Endothelial cell of umbilical vein (primary cell): ENCODE measurements at regions of chr4 and their contacts with region 1.

Region 1: DNA sequence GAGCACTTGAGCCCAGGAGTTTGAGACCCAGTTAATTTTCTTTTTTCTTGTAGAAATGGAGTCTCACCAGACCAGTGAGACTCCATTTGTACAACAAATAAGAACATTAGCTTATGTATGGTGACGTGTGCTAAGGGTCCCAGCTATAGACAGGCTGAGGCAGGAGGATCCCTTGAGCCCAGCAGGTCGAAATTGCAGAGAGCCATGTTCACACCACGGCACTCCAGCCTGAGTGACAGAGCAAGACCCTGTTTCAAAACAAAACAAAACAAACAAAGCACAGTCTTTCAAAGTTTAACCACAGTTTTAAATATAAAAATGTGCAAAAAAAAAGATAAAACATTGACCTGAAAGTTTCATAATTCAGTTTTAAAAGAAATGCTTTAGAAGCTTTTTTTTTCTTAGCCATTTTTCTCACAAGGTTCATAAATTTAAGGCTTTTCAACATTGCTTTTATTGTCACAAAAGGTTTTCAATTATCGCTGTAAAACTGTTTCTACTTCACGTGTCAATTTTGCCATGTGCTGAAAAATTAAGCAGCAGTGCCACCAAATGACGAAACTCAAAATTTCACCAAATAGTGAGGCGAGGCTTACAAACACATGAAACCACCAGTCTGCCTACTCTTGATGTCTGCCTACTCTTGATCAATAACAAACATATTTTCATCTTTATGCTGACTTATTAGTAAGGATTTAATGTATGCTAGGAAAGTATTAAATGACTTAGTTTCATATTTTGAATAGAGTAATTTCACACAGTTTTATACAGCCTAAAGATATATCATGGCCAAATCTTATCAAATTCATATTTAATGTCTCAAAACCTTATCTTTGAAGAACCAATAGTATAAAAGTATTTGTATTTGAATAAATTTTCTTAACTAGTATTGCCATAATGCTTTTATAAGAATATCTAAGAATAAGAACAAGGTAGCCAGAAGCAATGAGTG is 126.3 kb downstream of the NEK1 start:
- DNase-seq: peak; percentile 78
- H3K4me3 ChIP-seq: no peak overlapping the region
- H3K27ac ChIP-seq: no peak overlapping the region
- H3K4me1 ChIP-seq: peaks cover 3% of the 10 kb centered on the region
- H3K27me3 ChIP-seq: no peaks in the 10 kb centered on the region
- CTCF ChIP-seq: peak; percentile 39 to 52
- POLR2A ChIP-seq: no peak

Region 2: GRCh38 chr4:168923526-168924194 is 562.4 kb before region 1 on chr4:
- CTCF ChIA-PET with region 1: interaction called, 96 read pairs
- POLR2A ChIA-PET with region 1: no interaction called
- dilution Hi-C with region 1: loop called (anchors 10 kb)
- intact Hi-C with region 1: loop called (anchors 1 kb)
- DNase-seq: peak; percentile 67
- H3K4me3 ChIP-seq: no peak overlapping the region
- H3K27ac ChIP-seq: no peak overlapping the region
- H3K4me1 ChIP-seq: no peaks in the 10 kb centered on the region
- H3K27me3 ChIP-seq: no peaks in the 10 kb centered on the region
- CTCF ChIP-seq: peak; percentile 57 to 66
- POLR2A ChIP-seq: no peak

Region 3: GRCh38 chr4:168995537-168996295 is 490.4 kb before region 1 on chr4:
- CTCF ChIA-PET with region 1: interaction called, 7 read pairs
- POLR2A ChIA-PET with region 1: no interaction called
- dilution Hi-C with region 1: no loop called
- intact Hi-C with region 1: loop called (anchors 1 kb)
- DNase-seq: peak; percentile 24
- H3K4me3 ChIP-seq: no peak overlapping the region
- H3K27ac ChIP-seq: no peak overlapping the region
- H3K4me1 ChIP-seq: no peaks in the 10 kb centered on the region
- H3K27me3 ChIP-seq: no peaks in the 10 kb centered on the region
- CTCF ChIP-seq: peak in 1 of 2 donors; percentile 3
- POLR2A ChIP-seq: no peak

Region 4: DNA sequence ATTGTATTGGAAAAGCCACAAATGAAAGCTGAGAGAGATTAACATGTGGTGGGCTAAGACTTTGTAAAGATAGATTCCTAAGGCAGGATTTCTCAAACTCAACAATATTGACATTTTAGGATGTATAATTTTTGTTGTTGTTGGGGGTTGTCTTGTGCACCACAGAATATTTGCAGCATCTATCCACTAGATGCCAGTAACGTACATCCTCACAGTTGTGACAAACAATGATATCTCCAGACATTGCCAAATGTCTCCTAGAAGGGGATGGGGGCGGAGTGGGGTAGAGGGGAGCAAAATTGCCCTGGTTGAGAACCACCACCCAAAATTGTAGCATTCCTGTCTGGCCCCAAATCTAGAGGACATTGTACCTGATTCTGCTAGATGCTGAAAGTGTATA is 461.3 kb before region 1 on chr4:
- CTCF ChIA-PET with region 1: interaction called, 25 read pairs
- POLR2A ChIA-PET with region 1: no interaction called
- dilution Hi-C with region 1: loop called (anchors 10 kb)
- intact Hi-C with region 1: loop called (anchors 1 kb)
- DNase-seq: peak; percentile 68
- H3K4me3 ChIP-seq: no peak overlapping the region
- H3K27ac ChIP-seq: no peak overlapping the region
- H3K4me1 ChIP-seq: no peaks in the 10 kb centered on the region
- H3K27me3 ChIP-seq: no peaks in the 10 kb centered on the region
- CTCF ChIP-seq: peak; percentile 51 to 57
- POLR2A ChIP-seq: no peak

Region 5: DNA sequence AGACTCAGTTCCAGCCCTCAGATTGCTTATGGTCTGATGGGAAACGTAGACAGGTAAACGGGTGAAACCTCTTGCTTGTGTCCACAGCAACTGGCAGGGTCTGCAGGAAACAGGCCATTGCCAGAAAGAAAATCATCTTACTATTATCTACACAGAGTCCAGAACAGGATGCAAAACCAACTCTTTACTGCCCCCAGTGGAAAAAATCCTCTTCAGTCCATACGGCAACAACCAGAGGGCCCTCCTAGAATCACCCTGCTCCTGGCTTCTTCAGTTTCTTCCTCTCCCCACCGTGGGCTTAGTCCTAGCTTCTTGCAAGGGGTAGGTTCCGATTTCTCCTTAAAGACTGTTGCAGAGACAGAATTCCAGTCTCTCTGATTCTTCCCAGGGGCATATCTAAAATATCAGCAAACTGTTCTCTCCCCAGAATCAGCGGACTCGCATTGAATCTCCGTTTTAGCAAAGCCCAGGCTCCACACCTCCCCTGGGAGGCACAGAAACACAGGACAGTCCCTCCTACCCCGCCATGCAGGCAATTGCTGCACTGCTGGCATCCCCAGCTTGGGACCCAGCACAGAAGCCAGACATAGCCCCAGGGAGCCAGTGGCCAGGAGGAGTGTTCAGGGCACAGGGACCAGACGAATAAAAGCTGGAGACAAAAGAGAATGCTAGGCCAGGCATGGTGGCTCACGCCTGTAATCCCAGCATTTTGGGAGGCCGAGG is 174.3 kb before region 1 on chr4:
- CTCF ChIA-PET with region 1: interaction called, 4 read pairs
- POLR2A ChIA-PET with region 1: no interaction called
- dilution Hi-C with region 1: no loop called
- intact Hi-C with region 1: loop called (anchors 10 kb)
- DNase-seq: peak; percentile 57
- H3K4me3 ChIP-seq: no peak overlapping the region
- H3K27ac ChIP-seq: no peak overlapping the region
- H3K4me1 ChIP-seq: peaks cover 13% of the 10 kb centered on the region
- H3K27me3 ChIP-seq: no peaks in the 10 kb centered on the region
- CTCF ChIP-seq: peak; percentile 60 to 66
- POLR2A ChIP-seq: no peak

Region 6: GRCh38 chr4:169377367-169377766 is 108.7 kb before region 1 on chr4:
- CTCF ChIA-PET with region 1: no interaction called
- POLR2A ChIA-PET with region 1: no interaction called
- dilution Hi-C with region 1: no loop called
- intact Hi-C with region 1: no loop called
- DNase-seq: no peak
- H3K4me3 ChIP-seq: no peak overlapping the region
- H3K27ac ChIP-seq: no peak overlapping the region
- H3K4me1 ChIP-seq: no peaks in the 10 kb centered on the region
- H3K27me3 ChIP-seq: no peaks in the 10 kb centered on the region
- CTCF ChIP-seq: no peak
- POLR2A ChIP-seq: no peak